Posterior vena cava (tissue), 2 donors: ENCODE measurements at regions of chr11 and their contacts with region 1.

Region 1: GRCh38 chr11:132330515-132330914 is 960.1 kb downstream of the NTM start:
- DNase-seq: no peak

Region 2: GRCh38 chr11:132278801-132279574 is 51.5 kb before region 1 on chr11:
- intact Hi-C with region 1: no loop called
- DNase-seq: no peak

Region 3: DNA sequence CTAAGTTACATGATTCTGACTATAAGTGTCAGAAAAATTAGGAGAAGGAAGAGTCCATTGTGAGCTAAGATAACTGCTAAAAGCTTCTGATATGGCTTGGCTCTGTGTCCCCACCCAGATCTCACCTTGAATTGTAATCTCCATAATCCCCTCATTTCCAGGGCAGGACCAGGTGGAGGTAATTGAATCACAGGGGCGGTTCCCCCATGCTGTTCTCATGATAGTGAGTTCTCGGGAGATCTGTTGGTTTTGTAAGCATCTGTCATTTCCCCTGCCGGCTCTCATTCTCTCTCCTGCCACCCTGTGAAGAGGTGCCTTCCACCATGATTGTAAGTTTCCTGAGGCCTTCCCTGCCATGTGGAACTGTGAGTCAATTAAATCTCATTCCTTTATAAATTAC is 971.5 kb after region 1 on chr11:
- intact Hi-C with region 1: loop called in 1 of 2 experiments (anchors 5 kb)
- DNase-seq: no peak